ENCODE measurements at regions of chr12 and their contacts with region 1.

Region 1: GRCh38 chr12:107558141-107558815 is 127.3 kb upstream of the PWP1 start:
- DNase-seq: no peak
- H3K4me3 ChIP-seq: no peak overlapping the region
- H3K4me3 Mint-ChIP-seq: no peak overlapping the region
- H3K27ac Mint-ChIP-seq: no peak overlapping the region
- H3K4me1 ChIP-seq: no peaks in the 10 kb centered on the region
- H3K4me1 Mint-ChIP-seq: no peaks in the 10 kb centered on the region
- H3K27me3 ChIP-seq: no peaks in the 10 kb centered on the region
- H3K27me3 Mint-ChIP-seq: peaks cover 4% of the 10 kb centered on the region
- CTCF ChIP-seq: no peak

Region 2: GRCh38 chr12:107159384-107159900 is 398.8 kb before region 1 on chr12:
- CTCF ChIA-PET with region 1: no interaction called
- POLR2A ChIA-PET with region 1: no interaction called
- intact Hi-C with region 1: no loop called
- DNase-seq: no peak
- H3K4me3 ChIP-seq: no peak overlapping the region
- H3K4me3 Mint-ChIP-seq: no peak overlapping the region
- H3K27ac Mint-ChIP-seq: no peak overlapping the region
- H3K4me1 ChIP-seq: no peaks in the 10 kb centered on the region
- H3K4me1 Mint-ChIP-seq: no peaks in the 10 kb centered on the region
- H3K27me3 ChIP-seq: no peaks in the 10 kb centered on the region
- H3K27me3 Mint-ChIP-seq: peaks cover 20% of the 10 kb centered on the region
- CTCF ChIP-seq: no peak

Region 3: GRCh38 chr12:107264667-107265066 is 293.6 kb before region 1 on chr12:
- CTCF ChIA-PET with region 1: no interaction called
- POLR2A ChIA-PET with region 1: no interaction called
- intact Hi-C with region 1: no loop called
- DNase-seq: no peak
- H3K4me3 ChIP-seq: no peak overlapping the region
- H3K4me3 Mint-ChIP-seq: no peak overlapping the region
- H3K27ac Mint-ChIP-seq: no peak overlapping the region
- H3K4me1 ChIP-seq: no peaks in the 10 kb centered on the region
- H3K4me1 Mint-ChIP-seq: no peaks in the 10 kb centered on the region
- H3K27me3 ChIP-seq: no peaks in the 10 kb centered on the region
- H3K27me3 Mint-ChIP-seq: peaks cover 23% of the 10 kb centered on the region
- CTCF ChIP-seq: no peak

Region 4: GRCh38 chr12:108865169-108865568 is 1306.9 kb after region 1 on chr12:
- CTCF ChIA-PET with region 1: no interaction called
- POLR2A ChIA-PET with region 1: interaction called, 14 read pairs
- intact Hi-C with region 1: no loop called
- DNase-seq: no peak
- H3K4me3 ChIP-seq: no peak overlapping the region
- H3K4me3 Mint-ChIP-seq: no peak overlapping the region
- H3K27ac Mint-ChIP-seq: no peak overlapping the region
- H3K4me1 ChIP-seq: no peaks in the 10 kb centered on the region
- H3K4me1 Mint-ChIP-seq: no peaks in the 10 kb centered on the region
- H3K27me3 ChIP-seq: no peaks in the 10 kb centered on the region
- H3K27me3 Mint-ChIP-seq: no peaks in the 10 kb centered on the region
- CTCF ChIP-seq: no peak

Measured in Caco-2 (cell line).